Activated B cell treated with CpG ODN at 0.5 μM for 24 hours (primary cell): ENCODE measurements at regions of chr2 and their contacts with region 1.

Region 1: DNA sequence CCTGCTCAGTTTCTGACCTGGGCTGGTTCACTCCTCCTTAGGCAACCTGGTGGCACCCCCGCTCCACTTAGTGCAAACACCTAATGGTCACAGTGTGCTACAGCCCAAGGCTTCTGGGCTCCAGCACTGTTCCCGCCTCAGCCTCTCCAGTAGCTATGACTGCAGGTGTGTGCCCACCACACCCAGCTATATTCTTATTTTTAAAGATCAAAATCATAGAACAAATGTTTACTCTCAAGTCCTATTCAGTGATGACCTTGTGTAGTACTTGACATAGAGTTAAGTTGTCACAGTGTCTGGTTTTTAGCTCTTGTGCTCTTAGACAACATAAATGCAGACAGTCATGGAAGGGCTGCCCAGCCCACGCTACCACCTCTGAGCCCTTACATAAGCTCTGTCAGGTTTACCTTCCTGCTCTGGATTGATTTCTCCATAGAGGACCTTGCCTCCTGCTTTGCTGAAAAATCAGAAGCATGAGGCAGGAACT is 82.2 kb upstream of the SLC1A4 start:
- DNase-seq: no peak
- ATAC-seq: no peak
- H3K4me3 Mint-ChIP-seq: no peak overlapping the region
- H3K27ac Mint-ChIP-seq: no peak overlapping the region
- H3K4me1 Mint-ChIP-seq: peaks cover 28% of the 10 kb centered on the region
- H3K27me3 Mint-ChIP-seq: no peaks in the 10 kb centered on the region
- CTCF ChIP-seq: no peak

Region 2: GRCh38 chr2:64737547-64737946 is 169.4 kb before region 1 on chr2:
- CTCF ChIA-PET with region 1: no interaction called
- POLR2A ChIA-PET with region 1: interaction called, 10 read pairs
- intact Hi-C with region 1: no loop called
- DNase-seq: no peak
- ATAC-seq: no peak
- H3K4me3 Mint-ChIP-seq: no peak overlapping the region
- H3K27ac Mint-ChIP-seq: no peak overlapping the region
- H3K4me1 Mint-ChIP-seq: peaks cover 8% of the 10 kb centered on the region
- H3K27me3 Mint-ChIP-seq: no peaks in the 10 kb centered on the region
- CTCF ChIP-seq: no peak